Caco-2 (cell line): ENCODE measurements at regions of chr5 and their contacts with region 1.

Region 1: DNA sequence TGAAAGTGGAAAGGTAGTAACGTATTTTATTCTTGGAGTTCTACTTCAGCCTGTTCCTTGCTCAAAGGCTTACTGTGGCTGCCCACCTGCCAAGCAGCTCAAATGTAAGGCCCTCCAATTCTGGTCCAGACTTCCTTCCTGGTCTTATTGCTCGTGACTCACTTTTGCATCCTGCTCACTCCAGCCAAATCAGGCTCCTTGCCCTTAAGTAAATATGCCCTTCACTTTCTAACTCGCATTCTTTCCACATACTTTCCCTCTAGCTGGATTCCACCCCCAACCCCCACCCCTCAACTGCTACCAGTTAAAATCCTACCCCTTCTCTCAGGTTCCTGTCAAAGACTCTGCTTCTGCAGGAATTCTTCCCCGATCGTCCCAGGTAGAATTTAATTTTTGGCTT is 96.6 kb downstream of the GALNT10 start:
- DNase-seq: peak; percentile 71 to 83
- H3K4me3 ChIP-seq: no peak overlapping the region
- H3K4me3 Mint-ChIP-seq: peak overlapping the region; percentile 48
- H3K27ac Mint-ChIP-seq: peak overlapping the region; percentile 84
- H3K4me1 ChIP-seq: peaks cover 77% of the 10 kb centered on the region
- H3K4me1 Mint-ChIP-seq: peaks cover 47% of the 10 kb centered on the region
- H3K27me3 ChIP-seq: no peaks in the 10 kb centered on the region
- H3K27me3 Mint-ChIP-seq: no peaks in the 10 kb centered on the region
- CTCF ChIP-seq: no peak

Region 2: DNA sequence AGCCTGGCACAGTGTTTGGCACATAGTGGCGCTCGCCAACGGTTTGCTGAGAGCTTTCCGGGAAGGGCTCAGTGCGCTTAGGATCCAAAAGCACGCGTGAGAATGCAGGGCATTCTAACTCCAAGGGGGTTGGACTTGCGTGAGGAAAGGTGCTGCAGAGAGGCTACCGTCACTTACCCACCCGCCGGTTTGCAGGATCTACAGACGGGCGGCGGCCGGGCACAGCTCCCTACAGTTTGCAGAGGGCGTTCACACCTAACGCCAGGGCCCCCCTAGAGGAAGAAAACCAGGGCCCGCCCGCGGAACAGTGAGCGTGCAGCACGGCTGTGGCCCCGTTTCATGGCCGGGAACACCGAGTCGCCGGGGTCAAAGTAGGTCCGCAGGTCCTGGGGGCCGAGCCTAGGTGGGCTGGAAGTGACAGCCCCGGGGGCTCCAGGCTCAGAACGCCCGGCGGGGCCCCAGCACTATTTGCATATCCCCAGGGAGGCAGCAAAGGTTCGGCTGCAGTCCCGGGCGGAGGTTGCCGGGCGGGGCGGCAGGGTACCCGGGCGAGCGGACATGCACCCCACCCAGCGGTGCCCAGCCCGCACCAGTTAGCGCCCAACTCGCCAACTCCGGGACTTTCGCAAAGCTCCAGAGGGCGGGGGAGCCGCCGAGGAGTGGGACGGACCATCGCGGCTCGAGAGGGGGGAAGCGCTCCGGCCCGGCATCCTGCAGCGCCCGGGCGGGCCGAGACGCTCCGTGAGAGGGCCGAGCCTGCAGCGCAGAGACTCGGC is 97.1 kb before region 1 on chr5:
- CTCF ChIA-PET with region 1: interaction called, 4 read pairs
- POLR2A ChIA-PET with region 1: interaction called, 5 read pairs
- intact Hi-C with region 1: loop called (anchors 2 kb)
- DNase-seq: peak; percentile 76 to 80
- H3K4me3 ChIP-seq: peak overlapping the region; percentile 94
- H3K4me3 Mint-ChIP-seq: peak overlapping the region; percentile 72
- H3K27ac Mint-ChIP-seq: no peak overlapping the region
- H3K4me1 ChIP-seq: no peaks in the 10 kb centered on the region
- H3K4me1 Mint-ChIP-seq: peaks cover 25% of the 10 kb centered on the region
- H3K27me3 ChIP-seq: no peaks in the 10 kb centered on the region; the same call in 1 of the 2 replicates
- H3K27me3 Mint-ChIP-seq: peaks cover 10% of the 10 kb centered on the region
- CTCF ChIP-seq: peak; percentile 41 to 72

Region 3: GRCh38 chr5:154264549-154265196 is 22.5 kb before region 1 on chr5:
- CTCF ChIA-PET with region 1: no interaction called
- POLR2A ChIA-PET with region 1: no interaction called
- intact Hi-C with region 1: loop called (anchors 2 kb)
- DNase-seq: no peak
- H3K4me3 ChIP-seq: no peak overlapping the region
- H3K4me3 Mint-ChIP-seq: no peak overlapping the region
- H3K27ac Mint-ChIP-seq: no peak overlapping the region
- H3K4me1 ChIP-seq: peaks cover 12% of the 10 kb centered on the region
- H3K4me1 Mint-ChIP-seq: no peaks in the 10 kb centered on the region
- H3K27me3 ChIP-seq: no peaks in the 10 kb centered on the region
- H3K27me3 Mint-ChIP-seq: no peaks in the 10 kb centered on the region
- CTCF ChIP-seq: no peak

Region 4: DNA sequence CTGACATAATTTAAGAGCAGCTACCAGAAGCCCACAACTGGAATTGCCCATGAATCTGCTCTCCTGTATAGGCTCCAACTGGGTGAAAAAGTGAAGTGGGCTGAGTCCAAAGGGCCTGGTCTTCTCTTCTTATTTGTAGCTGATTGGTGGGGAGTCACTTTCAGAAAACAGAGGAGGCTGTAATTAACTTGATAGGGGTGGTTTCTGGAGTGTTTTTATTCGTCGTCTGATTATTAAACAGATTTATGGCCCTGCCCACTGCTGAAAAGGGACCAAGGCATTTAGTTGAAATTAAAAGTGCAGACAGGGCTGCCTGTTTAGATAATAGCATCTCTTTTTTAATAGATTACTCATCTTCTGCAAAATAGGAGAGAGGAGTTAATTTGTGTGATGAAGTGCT is 77.6 kb after region 1 on chr5:
- CTCF ChIA-PET with region 1: no interaction called
- POLR2A ChIA-PET with region 1: no interaction called
- intact Hi-C with region 1: loop called (anchors 5 kb)
- DNase-seq: no peak
- H3K4me3 ChIP-seq: no peak overlapping the region
- H3K4me3 Mint-ChIP-seq: no peak overlapping the region
- H3K27ac Mint-ChIP-seq: no peak overlapping the region
- H3K4me1 ChIP-seq: peaks cover 18% of the 10 kb centered on the region; the same call in 1 of the 2 replicates
- H3K4me1 Mint-ChIP-seq: peaks cover 10% of the 10 kb centered on the region
- H3K27me3 ChIP-seq: no peaks in the 10 kb centered on the region
- H3K27me3 Mint-ChIP-seq: no peaks in the 10 kb centered on the region
- CTCF ChIP-seq: no peak

Region 5: GRCh38 chr5:154384480-154385235 is 97.5 kb after region 1 on chr5:
- CTCF ChIA-PET with region 1: no interaction called
- POLR2A ChIA-PET with region 1: no interaction called
- intact Hi-C with region 1: loop called (anchors 5 kb)
- DNase-seq: no peak
- H3K4me3 ChIP-seq: no peak overlapping the region
- H3K4me3 Mint-ChIP-seq: no peak overlapping the region
- H3K27ac Mint-ChIP-seq: no peak overlapping the region
- H3K4me1 ChIP-seq: peaks cover 11% of the 10 kb centered on the region; the same call in 1 of the 2 replicates
- H3K4me1 Mint-ChIP-seq: peaks cover 10% of the 10 kb centered on the region
- H3K27me3 ChIP-seq: no peaks in the 10 kb centered on the region
- H3K27me3 Mint-ChIP-seq: no peaks in the 10 kb centered on the region
- CTCF ChIP-seq: no peak

Region 6: GRCh38 chr5:154405078-154405792 is 118.1 kb after region 1 on chr5:
- CTCF ChIA-PET with region 1: no interaction called
- POLR2A ChIA-PET with region 1: no interaction called
- intact Hi-C with region 1: loop called (anchors 5 kb)
- DNase-seq: peak; percentile 80 to 85
- H3K4me3 ChIP-seq: 0 out of 2 replicates have a peak overlapping the region, but pooled peaks have one; percentile 0
- H3K4me3 Mint-ChIP-seq: peak overlapping the region; percentile 54
- H3K27ac Mint-ChIP-seq: no peak overlapping the region
- H3K4me1 ChIP-seq: peaks cover 5% of the 10 kb centered on the region
- H3K4me1 Mint-ChIP-seq: peaks cover 9% of the 10 kb centered on the region
- H3K27me3 ChIP-seq: no peaks in the 10 kb centered on the region
- H3K27me3 Mint-ChIP-seq: no peaks in the 10 kb centered on the region
- CTCF ChIP-seq: peak; percentile 83 to 92

Region 7: GRCh38 chr5:154445422-154446182 is 158.5 kb after region 1 on chr5 and contains the start of gene SAP30L:
- CTCF ChIA-PET with region 1: no interaction called
- POLR2A ChIA-PET with region 1: no interaction called
- intact Hi-C with region 1: loop called (anchors 5 kb)
- DNase-seq: peak; percentile 94 to 97
- H3K4me3 ChIP-seq: peak within 1 kb of the TSS; percentile 77
- H3K4me3 Mint-ChIP-seq: peak within 1 kb of the TSS; percentile 98
- H3K27ac Mint-ChIP-seq: peak within 1 kb of the TSS; percentile 77
- H3K4me1 ChIP-seq: no peaks in the 10 kb centered on the region
- H3K4me1 Mint-ChIP-seq: peaks cover 16% of the 10 kb centered on the region
- H3K27me3 ChIP-seq: no peaks in the 10 kb centered on the region
- H3K27me3 Mint-ChIP-seq: no peaks in the 10 kb centered on the region
- CTCF ChIP-seq: no peak
- total RNA-seq, gene SAP30L: 30.5 and 32.5 TPM in 2 replicates